ENCODE measurements at regions of chr2 and their contacts with region 1.

Region 1: GRCh38 chr2:108776475-108776874 is 10.1 kb upstream of the CCDC138 start:
- DNase-seq: no peak
- H3K4me3 ChIP-seq: no peak overlapping the region
- H3K27ac ChIP-seq: no peak overlapping the region
- H3K4me1 ChIP-seq: no peaks in the 10 kb centered on the region
- H3K27me3 ChIP-seq: no peaks in the 10 kb centered on the region
- CTCF ChIP-seq: no peak

Region 2: GRCh38 chr2:108968619-108969018 is 192.1 kb after region 1 on chr2:
- CTCF ChIA-PET with region 1: interaction called, 11 read pairs
- POLR2A ChIA-PET with region 1: no interaction called
- intact Hi-C with region 1: no loop called
- DNase-seq: peak; percentile 48 to 58
- H3K4me3 ChIP-seq: no peak overlapping the region
- H3K27ac ChIP-seq: no peak overlapping the region
- H3K4me1 ChIP-seq: peaks cover 63% of the 10 kb centered on the region
- H3K27me3 ChIP-seq: no peaks in the 10 kb centered on the region
- CTCF ChIP-seq: no peak